GM10248 (cell line): ENCODE measurements at regions of chr7 and their contacts with region 1.

Region 1: GRCh38 chr7:29189743-29190201 is 4.8 kb upstream of the CHN2 start:
- DNase-seq: peak; percentile 65
- CTCF ChIP-seq: peak; percentile 79

Region 2: DNA sequence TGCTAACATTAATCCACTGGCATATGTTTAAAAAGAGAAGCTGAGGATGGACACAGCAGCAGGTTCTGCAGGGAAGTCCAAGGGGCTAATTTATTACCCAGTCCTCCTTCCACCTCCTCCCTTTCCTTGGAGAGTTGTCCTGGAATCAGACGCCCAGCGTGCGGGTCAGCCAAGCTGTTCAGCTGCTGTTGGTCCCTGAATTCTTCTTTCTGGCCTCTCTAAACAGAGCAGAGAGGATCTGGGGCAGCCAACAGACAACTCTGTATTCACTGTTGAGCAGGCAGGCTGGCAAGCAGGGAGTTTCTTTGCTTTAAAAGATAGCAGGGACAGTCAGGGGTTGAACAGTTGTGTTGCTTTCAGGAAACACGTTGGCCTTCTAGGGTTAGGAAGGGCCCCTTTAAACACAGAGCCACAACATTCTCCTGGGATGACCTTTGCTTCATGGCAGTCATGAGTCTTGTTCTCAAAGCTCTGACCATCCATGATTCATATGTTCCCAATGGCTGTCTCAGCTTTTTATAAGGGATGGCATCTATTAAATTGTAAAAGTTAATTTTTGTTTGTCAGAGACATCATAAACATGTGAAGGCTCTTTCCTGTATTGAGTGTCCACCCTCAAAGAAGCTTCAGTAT is 560.4 kb before region 1 on chr7:
- CTCF ChIA-PET with region 1: no interaction called
- POLR2A ChIA-PET with region 1: no interaction called
- DNase-seq: no peak
- CTCF ChIP-seq: no peak

Region 3: GRCh38 chr7:29177963-29178600 is 11.7 kb before region 1 on chr7:
- CTCF ChIA-PET with region 1: interaction called, 20 read pairs
- POLR2A ChIA-PET with region 1: no interaction called
- DNase-seq: no peak
- CTCF ChIP-seq: no peak

Region 4: GRCh38 chr7:29202651-29203069 is 12.9 kb after region 1 on chr7:
- CTCF ChIA-PET with region 1: interaction called, 11 read pairs
- POLR2A ChIA-PET with region 1: no interaction called
- DNase-seq: no peak
- CTCF ChIP-seq: no peak

Region 5: GRCh38 chr7:29281782-29282541 is 92.2 kb after region 1 on chr7:
- CTCF ChIA-PET with region 1: no interaction called
- POLR2A ChIA-PET with region 1: no interaction called
- DNase-seq: no peak
- CTCF ChIP-seq: no peak

Region 6: GRCh38 chr7:29370531-29371314 is 181.0 kb after region 1 on chr7:
- CTCF ChIA-PET with region 1: no interaction called
- POLR2A ChIA-PET with region 1: no interaction called
- DNase-seq: no peak
- CTCF ChIP-seq: no peak